ENCODE measurements at regions of chr2 and their contacts with region 1.

Region 1: DNA sequence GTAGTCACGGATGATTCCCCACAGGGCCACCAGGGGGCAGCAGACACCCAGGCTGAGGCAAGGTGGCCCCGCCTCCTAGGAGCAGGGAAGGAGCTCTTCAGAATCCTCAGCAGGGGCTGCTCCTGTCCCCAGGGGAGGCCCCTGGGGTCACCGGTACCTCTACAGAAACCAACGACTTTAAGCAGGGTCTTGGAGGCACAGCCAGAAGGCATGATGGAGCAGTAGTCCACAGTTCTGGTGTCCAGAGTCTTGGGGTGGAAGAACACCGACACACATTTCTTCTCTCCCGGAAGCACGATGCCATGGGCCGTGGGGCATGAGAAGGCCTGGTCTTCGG is 11.5 kb downstream of the CFAP65 start:
- DNase-seq: peak; percentile 76 to 80
- ATAC-seq: peak; percentile 89 to 97; a peak in 5 of 6 replicates
- H3K4me3 ChIP-seq: no peak overlapping the region
- H3K27ac ChIP-seq: no peak overlapping the region
- H3K4me1 ChIP-seq: no peaks in the 10 kb centered on the region
- CTCF ChIP-seq: peak; percentile 88
- EP300 ChIP-seq: no peak
- POLR2A ChIP-seq: no peak
- RAD21 ChIP-seq: peak; percentile 82 to 87

Region 2: GRCh38 chr2:218995972-218996711 is 33.7 kb before region 1 on chr2:
- CTCF ChIA-PET with region 1: interaction called, 57 read pairs
- POLR2A ChIA-PET with region 1: no interaction called
- DNase-seq: peak; percentile 87
- ATAC-seq: peak; percentile 78 to 93
- H3K4me3 ChIP-seq: peak overlapping the region; percentile 49
- H3K27ac ChIP-seq: peak overlapping the region; percentile 79 to 84
- H3K4me1 ChIP-seq: peaks cover 10% of the 10 kb centered on the region
- CTCF ChIP-seq: peak; percentile 87
- EP300 ChIP-seq: no peak
- POLR2A ChIP-seq: peak; percentile 84
- RAD21 ChIP-seq: peak; percentile 74 to 80

Region 3: GRCh38 chr2:219041252-219041651 is 11.5 kb after region 1 on chr2 and contains the start of gene CFAP65:
- CTCF ChIA-PET with region 1: interaction called, 149 read pairs
- POLR2A ChIA-PET with region 1: no interaction called
- DNase-seq: peak; percentile 53 to 68
- ATAC-seq: peak; percentile 75 to 85
- H3K4me3 ChIP-seq: peak within 1 kb of the TSS; percentile 49
- H3K27ac ChIP-seq: no peak within 1 kb of the TSS
- H3K4me1 ChIP-seq: peaks cover 3% of the 10 kb centered on the region; the same call in 1 of the 3 replicates
- CTCF ChIP-seq: no peak
- EP300 ChIP-seq: no peak
- POLR2A ChIP-seq: no peak
- RAD21 ChIP-seq: no peak
- polyA plus RNA-seq, gene CFAP65: 0.09 and 0.12 TPM in 2 replicates

Region 4: GRCh38 chr2:219099329-219099728 is 69.5 kb after region 1 on chr2:
- CTCF ChIA-PET with region 1: interaction called, 13 read pairs
- POLR2A ChIA-PET with region 1: no interaction called
- DNase-seq: no peak
- ATAC-seq: no peak
- H3K4me3 ChIP-seq: no peak overlapping the region
- H3K27ac ChIP-seq: no peak overlapping the region
- H3K4me1 ChIP-seq: no peaks in the 10 kb centered on the region
- CTCF ChIP-seq: no peak
- EP300 ChIP-seq: no peak
- POLR2A ChIP-seq: no peak
- RAD21 ChIP-seq: no peak

Region 5: GRCh38 chr2:219133976-219134375 is 104.2 kb after region 1 on chr2:
- CTCF ChIA-PET with region 1: interaction called, 14 read pairs
- POLR2A ChIA-PET with region 1: no interaction called
- DNase-seq: no peak
- ATAC-seq: no peak
- H3K4me3 ChIP-seq: no peak overlapping the region
- H3K27ac ChIP-seq: no peak overlapping the region
- H3K4me1 ChIP-seq: peaks cover 12% of the 10 kb centered on the region
- CTCF ChIP-seq: no peak
- EP300 ChIP-seq: no peak
- POLR2A ChIP-seq: no peak
- RAD21 ChIP-seq: no peak

Region 6: GRCh38 chr2:219160186-219161017 is 130.6 kb after region 1 on chr2 and contains the start of gene NHEJ1:
- CTCF ChIA-PET with region 1: interaction called, 173 read pairs
- POLR2A ChIA-PET with region 1: no interaction called
- DNase-seq: peak; percentile 94 to 95
- ATAC-seq: peak; percentile 94 to 96
- H3K4me3 ChIP-seq: peak within 1 kb of the TSS; percentile 54
- H3K27ac ChIP-seq: peak within 1 kb of the TSS; percentile 91 to 95
- H3K4me1 ChIP-seq: peaks cover 9% of the 10 kb centered on the region
- CTCF ChIP-seq: peak; percentile 95
- EP300 ChIP-seq: no peak
- POLR2A ChIP-seq: peak; percentile 80
- RAD21 ChIP-seq: peak; percentile 85 to 91
- polyA plus RNA-seq, gene NHEJ1: 31.8 and 34.7 TPM in 2 replicates

Measured in A549 (cell line).